Stomach (tissue), 19 donors: ENCODE measurements at regions of chr10 and their contacts with region 1.

Region 1: DNA sequence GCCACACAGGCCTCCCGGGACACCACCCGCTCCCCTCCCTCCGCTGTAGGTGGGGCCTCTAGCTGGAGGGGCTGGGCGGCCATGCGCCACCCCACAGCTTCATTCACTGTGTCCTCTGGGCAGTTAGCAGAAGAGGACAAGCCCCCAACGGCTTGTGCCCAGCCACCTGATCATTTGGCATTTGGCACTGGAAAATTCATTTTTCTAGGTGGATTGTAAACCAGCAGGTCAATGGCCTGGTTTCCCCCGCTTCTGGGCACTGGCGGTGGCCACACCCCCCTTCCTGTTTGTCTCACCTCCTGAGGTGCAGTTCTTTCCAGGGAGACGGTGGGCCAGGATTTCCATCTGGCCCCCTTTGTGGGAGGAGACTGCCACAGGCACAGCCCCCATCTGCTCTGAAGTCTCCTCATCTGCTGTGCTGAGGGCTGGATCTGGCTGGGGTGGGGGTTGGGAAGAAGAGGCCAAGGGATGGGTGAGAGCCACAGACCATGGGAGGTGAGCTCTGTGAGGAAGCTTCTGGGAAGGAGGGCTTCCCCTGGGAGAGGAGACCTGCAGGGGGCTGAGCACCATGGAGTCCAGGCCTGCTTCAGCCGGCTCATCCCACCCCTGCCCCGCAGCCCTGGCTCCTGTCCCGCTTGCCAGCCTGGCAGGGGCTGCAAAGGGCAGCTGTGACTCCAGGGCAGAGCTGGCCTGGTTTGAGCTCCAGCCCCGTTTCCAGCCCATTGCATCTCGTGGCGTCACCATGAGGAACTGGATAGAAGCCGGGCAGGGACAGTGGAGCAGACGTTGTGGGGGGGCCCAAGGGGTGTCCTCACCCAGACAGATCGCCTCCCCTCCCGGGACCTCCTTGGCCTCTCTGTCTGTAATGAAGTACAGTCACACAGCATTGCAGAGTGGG is 40.1 kb upstream of the SLC29A3 start:
- DNase-seq: no peak
- H3K4me3 ChIP-seq: no peak overlapping the region
- H3K27ac ChIP-seq: no peak overlapping the region
- H3K4me1 ChIP-seq: peaks cover 0 to 5% (median 0%) of the 10 kb centered on the region in 4 donors
- H3K27me3 ChIP-seq: no peaks in the 10 kb centered on the region
- CTCF ChIP-seq: no peak
- EP300 ChIP-seq: no peak
- POLR2A ChIP-seq: no peak

Region 2: DNA sequence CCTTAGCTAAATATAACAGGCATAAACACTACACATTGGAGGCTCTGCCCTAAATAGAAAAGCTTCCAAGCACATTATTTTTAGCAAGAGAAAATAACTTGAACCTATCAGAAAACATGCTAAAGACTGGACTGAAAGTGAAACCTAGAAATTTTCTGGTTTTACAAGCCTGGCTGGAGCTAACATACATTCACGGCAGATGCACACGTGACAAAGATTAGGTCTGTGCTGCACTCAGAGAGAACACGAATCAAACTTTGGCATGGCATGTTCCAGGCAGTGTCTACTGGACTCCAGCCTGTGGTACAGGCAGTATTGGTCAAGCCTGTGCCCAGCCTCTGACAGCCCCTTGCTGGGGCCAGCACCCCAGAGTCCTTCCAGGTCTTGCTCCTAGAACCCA is 296.5 kb before region 1 on chr10:
- intact Hi-C with region 1: no loop called
- DNase-seq: peak in 1 of 2 donors; percentile 38
- H3K4me3 ChIP-seq: no peak overlapping the region
- H3K27ac ChIP-seq: no peak overlapping the region
- H3K4me1 ChIP-seq: no peaks in the 10 kb centered on the region
- H3K27me3 ChIP-seq: peaks cover 0 to 6% (median 0%) of the 10 kb centered on the region in 3 donors
- CTCF ChIP-seq: no peak
- EP300 ChIP-seq: no peak
- POLR2A ChIP-seq: no peak

Region 3: GRCh38 chr10:71209352-71209715 is 69.6 kb before region 1 on chr10:
- intact Hi-C with region 1: loop called (anchors 5 kb)
- DNase-seq: peak in 1 of 2 donors; percentile 2
- H3K4me3 ChIP-seq: no peak overlapping the region
- H3K27ac ChIP-seq: no peak overlapping the region
- H3K4me1 ChIP-seq: peaks cover 0 to 35% (median 33%) of the 10 kb centered on the region in 4 donors
- H3K27me3 ChIP-seq: peaks cover 0 to 67% (median 12%) of the 10 kb centered on the region in 3 donors
- CTCF ChIP-seq: peak in 1 of 7 experiments; percentile 40
- EP300 ChIP-seq: no peak
- POLR2A ChIP-seq: no peak